ENCODE measurements at regions of chr5 and their contacts with region 1.

Region 1: GRCh38 chr5:82278095-82278918 is at the start of gene RPS23:
- DNase-seq: peak; percentile 92
- ATAC-seq: peak; percentile 95
- H3K4me3 Mint-ChIP-seq: peak within 1 kb of the TSS; percentile 89
- H3K27ac Mint-ChIP-seq: peak within 1 kb of the TSS; percentile 100
- H3K4me1 Mint-ChIP-seq: peaks cover 38% of the 10 kb centered on the region
- H3K27me3 Mint-ChIP-seq: no peaks in the 10 kb centered on the region
- CTCF ChIP-seq: no peak
- total RNA-seq, gene RPS23: 3,299 to 3,303 TPM

Region 2: GRCh38 chr5:82211855-82212572 is 66.3 kb before region 1 on chr5:
- CTCF ChIA-PET with region 1: no interaction called
- POLR2A ChIA-PET with region 1: no interaction called
- intact Hi-C with region 1: no loop called
- DNase-seq: no peak
- ATAC-seq: no peak
- H3K4me3 Mint-ChIP-seq: no peak overlapping the region
- H3K27ac Mint-ChIP-seq: no peak overlapping the region
- H3K4me1 Mint-ChIP-seq: no peaks in the 10 kb centered on the region
- H3K27me3 Mint-ChIP-seq: no peaks in the 10 kb centered on the region
- CTCF ChIP-seq: no peak

Region 3: DNA sequence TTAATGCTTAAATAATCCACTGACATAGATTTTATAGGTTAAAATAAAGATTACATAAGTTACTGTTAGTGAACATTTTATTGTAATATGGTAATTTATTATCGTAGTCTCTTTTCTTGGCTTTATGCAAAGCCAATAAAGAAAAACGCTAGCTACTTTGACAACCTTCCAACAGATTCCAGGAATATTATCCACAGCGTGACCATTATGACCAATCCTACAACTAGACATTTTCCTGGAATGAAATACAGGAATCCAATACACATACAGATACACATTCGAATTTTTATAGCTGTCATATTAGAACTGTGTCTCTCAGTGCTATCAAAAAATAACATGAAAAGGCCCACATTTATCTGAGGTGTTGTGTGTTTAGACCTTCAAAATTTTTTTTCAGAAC is 13.3 kb before region 1 on chr5:
- CTCF ChIA-PET with region 1: no interaction called
- POLR2A ChIA-PET with region 1: interaction called, 15 read pairs
- intact Hi-C with region 1: no loop called
- DNase-seq: no peak
- ATAC-seq: no peak
- H3K4me3 Mint-ChIP-seq: no peak overlapping the region
- H3K27ac Mint-ChIP-seq: no peak overlapping the region
- H3K4me1 Mint-ChIP-seq: no peaks in the 10 kb centered on the region
- H3K27me3 Mint-ChIP-seq: no peaks in the 10 kb centered on the region
- CTCF ChIP-seq: no peak

Region 4: GRCh38 chr5:82290908-82291307 is 12.6 kb after region 1 on chr5:
- CTCF ChIA-PET with region 1: interaction called, 3 read pairs
- POLR2A ChIA-PET with region 1: interaction called, 10 read pairs
- intact Hi-C with region 1: no loop called
- DNase-seq: no peak
- ATAC-seq: no peak
- H3K4me3 Mint-ChIP-seq: no peak overlapping the region
- H3K27ac Mint-ChIP-seq: no peak overlapping the region
- H3K4me1 Mint-ChIP-seq: no peaks in the 10 kb centered on the region
- H3K27me3 Mint-ChIP-seq: no peaks in the 10 kb centered on the region
- CTCF ChIP-seq: no peak

Region 5: GRCh38 chr5:82560561-82560960 is 282.3 kb after region 1 on chr5:
- CTCF ChIA-PET with region 1: no interaction called
- POLR2A ChIA-PET with region 1: no interaction called
- intact Hi-C with region 1: no loop called
- DNase-seq: no peak
- ATAC-seq: no peak
- H3K4me3 Mint-ChIP-seq: no peak overlapping the region
- H3K27ac Mint-ChIP-seq: no peak overlapping the region
- H3K4me1 Mint-ChIP-seq: no peaks in the 10 kb centered on the region
- H3K27me3 Mint-ChIP-seq: peaks cover 5% of the 10 kb centered on the region
- CTCF ChIP-seq: no peak

Measured in activated CD8-positive, alpha-beta T cell treated with anti-CD3 and anti-CD28 coated beads for 36 hours (primary cell).